ENCODE measurements at regions of chr2 and their contacts with region 1.

Region 1: GRCh38 chr2:216683846-216684507 is 11.4 kb downstream of the IGFBP5 start:
- DNase-seq: peak; percentile 95
- H3K4me3 ChIP-seq: no peak overlapping the region
- H3K27ac ChIP-seq: peak overlapping the region; percentile 38
- H3K4me1 ChIP-seq: peaks cover 31% of the 10 kb centered on the region
- H3K27me3 ChIP-seq: no peaks in the 10 kb centered on the region
- CTCF ChIP-seq: no peak

Region 2: DNA sequence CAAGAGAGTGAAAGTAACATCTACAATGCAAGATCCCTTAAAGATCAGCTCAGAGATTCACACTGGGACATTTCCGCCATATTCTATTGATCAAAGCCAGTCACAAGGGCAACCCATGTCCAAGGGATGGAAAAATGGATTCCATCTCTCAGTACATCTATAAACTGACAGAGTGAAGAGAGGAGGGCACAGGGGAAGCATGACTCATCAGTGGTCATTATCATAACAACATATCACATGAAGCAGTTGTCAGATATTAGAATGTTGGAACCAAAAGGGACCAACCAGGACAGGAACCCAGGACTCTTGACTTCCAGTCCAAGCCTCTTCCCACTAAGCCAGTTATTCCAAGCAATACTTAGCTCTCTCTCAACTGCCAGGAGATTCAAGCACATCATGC is 105.7 kb before region 1 on chr2:
- CTCF ChIA-PET with region 1: no interaction called
- dilution Hi-C with region 1: loop called (anchors 5 kb)
- in situ Hi-C with region 1: no loop called
- intact Hi-C with region 1: no loop called
- DNase-seq: no peak
- H3K4me3 ChIP-seq: no peak overlapping the region
- H3K27ac ChIP-seq: no peak overlapping the region
- H3K4me1 ChIP-seq: peaks cover 7% of the 10 kb centered on the region
- H3K27me3 ChIP-seq: no peaks in the 10 kb centered on the region
- CTCF ChIP-seq: no peak

Region 3: DNA sequence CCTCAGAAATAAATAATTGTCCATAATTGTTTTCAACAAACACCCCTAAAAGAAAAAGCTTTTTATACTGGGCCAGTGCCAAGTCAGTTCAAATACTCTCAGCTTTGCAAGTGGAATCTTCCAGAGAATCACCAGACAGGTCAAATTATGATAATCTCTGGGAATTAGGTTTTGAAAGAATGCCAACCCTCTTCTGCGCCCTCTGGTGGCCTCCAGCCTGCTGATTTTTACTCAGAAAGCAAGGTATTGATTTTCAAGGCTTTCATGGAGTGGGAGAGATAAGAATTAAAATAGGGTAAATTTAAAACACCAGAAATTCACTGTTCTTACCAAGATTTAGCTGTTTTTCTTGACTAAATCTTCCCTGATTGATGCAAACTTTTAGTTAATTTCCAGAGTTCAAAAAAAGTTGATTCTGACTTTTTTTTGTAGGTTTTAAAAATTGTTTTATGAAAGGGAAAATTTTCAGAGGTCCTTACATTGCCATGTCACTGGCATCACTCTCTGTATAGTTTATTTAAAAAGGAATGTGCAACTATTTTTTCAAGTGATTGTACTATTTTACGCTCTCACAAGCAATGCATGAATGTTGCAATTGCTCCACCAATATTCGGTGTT is 458.8 kb after region 1 on chr2:
- CTCF ChIA-PET with region 1: interaction called, 3 read pairs
- dilution Hi-C with region 1: loop called (anchors 25 kb)
- in situ Hi-C with region 1: no loop called
- intact Hi-C with region 1: loop called (anchors 1 kb)
- DNase-seq: peak; percentile 17
- H3K4me3 ChIP-seq: no peak overlapping the region
- H3K27ac ChIP-seq: no peak overlapping the region
- H3K4me1 ChIP-seq: no peaks in the 10 kb centered on the region
- H3K27me3 ChIP-seq: no peaks in the 10 kb centered on the region
- CTCF ChIP-seq: peak; percentile 78 to 81

Region 4: DNA sequence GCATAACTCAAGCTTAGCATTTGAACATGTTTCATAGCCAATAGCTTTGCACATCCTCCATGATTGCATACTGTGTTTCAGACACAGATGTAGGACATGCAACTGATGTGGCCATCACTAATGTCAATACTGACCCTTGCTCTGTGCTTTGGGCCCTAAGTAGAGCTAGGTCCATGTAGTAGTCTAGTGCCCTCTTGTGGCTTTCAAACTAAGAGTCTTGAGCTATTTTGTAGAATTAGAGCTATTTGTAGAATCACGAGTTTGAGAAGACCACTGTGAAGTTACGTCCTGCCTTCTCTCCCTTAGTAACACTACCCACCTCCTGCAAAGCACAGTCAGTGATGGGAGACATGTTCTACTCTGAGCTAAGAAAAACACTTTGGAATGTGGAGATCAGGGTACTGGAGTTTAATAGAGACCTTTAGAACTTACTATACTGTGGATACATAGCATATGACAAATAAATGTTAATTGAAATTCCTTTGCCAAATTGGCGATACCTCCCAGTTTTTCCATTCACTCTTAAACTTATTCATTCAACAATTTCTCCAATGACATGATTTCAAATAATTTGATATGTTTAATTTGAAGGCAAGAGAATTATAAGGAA is 482.4 kb after region 1 on chr2:
- CTCF ChIA-PET with region 1: interaction called, 13 read pairs
- dilution Hi-C with region 1: no loop called
- in situ Hi-C with region 1: no loop called
- intact Hi-C with region 1: loop called (anchors 1 kb)
- DNase-seq: peak; percentile 27
- H3K4me3 ChIP-seq: no peak overlapping the region
- H3K27ac ChIP-seq: no peak overlapping the region
- H3K4me1 ChIP-seq: peaks cover 8% of the 10 kb centered on the region
- H3K27me3 ChIP-seq: no peaks in the 10 kb centered on the region
- CTCF ChIP-seq: peak; percentile 57 to 69

Region 5: DNA sequence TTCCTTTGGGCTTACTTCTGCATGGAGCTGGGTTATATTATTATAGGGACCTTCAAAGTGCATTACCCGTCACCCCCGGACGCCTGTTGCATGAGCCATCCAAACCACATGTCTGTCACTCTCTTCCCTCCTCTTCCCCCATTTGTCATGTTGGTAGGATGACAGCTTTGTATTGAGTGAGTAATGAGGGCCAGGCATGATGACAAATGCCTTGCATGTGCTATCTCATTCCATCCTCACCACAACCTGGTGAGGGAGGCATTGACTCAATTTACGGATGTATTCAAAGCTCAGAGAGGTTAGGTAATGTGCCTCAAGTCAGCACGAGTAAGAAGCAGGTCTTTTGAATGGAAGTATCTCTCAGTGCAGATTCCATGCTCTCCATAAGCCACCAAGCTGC is 686.4 kb after region 1 on chr2:
- CTCF ChIA-PET with region 1: no interaction called
- dilution Hi-C with region 1: no loop called
- in situ Hi-C with region 1: no loop called
- intact Hi-C with region 1: loop called (anchors 2 kb)
- DNase-seq: peak; percentile 96
- H3K4me3 ChIP-seq: no peak overlapping the region
- H3K27ac ChIP-seq: no peak overlapping the region
- H3K4me1 ChIP-seq: peaks cover 37% of the 10 kb centered on the region
- H3K27me3 ChIP-seq: no peaks in the 10 kb centered on the region
- CTCF ChIP-seq: peak; percentile 16 to 51

Region 6: GRCh38 chr2:217510771-217511291 is 826.9 kb after region 1 on chr2:
- CTCF ChIA-PET with region 1: no interaction called
- dilution Hi-C with region 1: no loop called
- in situ Hi-C with region 1: no loop called
- intact Hi-C with region 1: loop called (anchors 1 kb)
- DNase-seq: peak; percentile 68
- H3K4me3 ChIP-seq: no peak overlapping the region
- H3K27ac ChIP-seq: no peak overlapping the region
- H3K4me1 ChIP-seq: peaks cover 5% of the 10 kb centered on the region
- H3K27me3 ChIP-seq: no peaks in the 10 kb centered on the region
- CTCF ChIP-seq: peak; percentile 64 to 79

Region 7: DNA sequence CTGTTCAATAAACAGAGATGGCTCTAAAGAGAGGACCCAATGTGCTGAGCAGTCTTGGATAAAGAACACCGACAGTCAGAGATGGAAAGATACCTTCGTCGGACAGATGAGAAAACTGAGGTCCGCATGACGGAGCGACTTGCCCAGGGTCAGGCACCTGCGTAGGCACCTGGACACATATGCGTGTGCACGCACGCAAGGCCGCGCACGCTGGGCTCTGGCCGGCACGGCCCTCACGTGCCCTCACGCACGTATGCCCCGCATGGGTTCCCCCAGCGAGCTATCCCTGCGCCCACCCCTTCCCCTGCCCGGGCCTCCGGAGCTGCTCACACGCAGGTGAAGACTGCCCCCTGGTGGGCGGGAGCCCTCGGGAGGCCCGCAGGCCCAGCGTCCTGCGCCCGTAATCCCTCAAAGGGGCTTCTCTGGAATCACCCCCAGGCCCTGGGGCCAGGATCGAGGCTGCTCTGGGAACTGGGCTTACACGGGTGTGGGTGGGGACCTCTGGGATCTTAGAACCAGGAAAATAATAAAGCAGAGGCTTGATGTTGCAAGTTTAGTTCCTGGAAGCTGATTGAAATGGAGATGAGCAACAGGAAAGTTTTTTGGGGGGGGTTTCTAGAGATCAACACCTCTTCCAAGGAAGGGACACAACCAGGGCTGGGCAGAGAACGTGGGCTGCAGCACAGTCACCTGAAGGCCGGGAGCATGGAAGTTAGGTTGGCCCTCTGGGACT is 1072.6 kb after region 1 on chr2:
- CTCF ChIA-PET with region 1: no interaction called
- dilution Hi-C with region 1: no loop called
- in situ Hi-C with region 1: no loop called
- intact Hi-C with region 1: loop called (anchors 1 kb)
- DNase-seq: no peak
- H3K4me3 ChIP-seq: no peak overlapping the region
- H3K27ac ChIP-seq: no peak overlapping the region
- H3K4me1 ChIP-seq: no peaks in the 10 kb centered on the region
- H3K27me3 ChIP-seq: peaks cover 3% of the 10 kb centered on the region
- CTCF ChIP-seq: peak; percentile 58 to 91

Measured in mammary epithelial cell (primary cell).